GM10248 (cell line): ENCODE measurements at regions of chr1 and their contacts with region 1.

Region 1: GRCh38 chr1:243312952-243313634 is 57.3 kb downstream of the SDCCAG8 start:
- DNase-seq: peak; percentile 22
- CTCF ChIP-seq: no peak

Region 2: DNA sequence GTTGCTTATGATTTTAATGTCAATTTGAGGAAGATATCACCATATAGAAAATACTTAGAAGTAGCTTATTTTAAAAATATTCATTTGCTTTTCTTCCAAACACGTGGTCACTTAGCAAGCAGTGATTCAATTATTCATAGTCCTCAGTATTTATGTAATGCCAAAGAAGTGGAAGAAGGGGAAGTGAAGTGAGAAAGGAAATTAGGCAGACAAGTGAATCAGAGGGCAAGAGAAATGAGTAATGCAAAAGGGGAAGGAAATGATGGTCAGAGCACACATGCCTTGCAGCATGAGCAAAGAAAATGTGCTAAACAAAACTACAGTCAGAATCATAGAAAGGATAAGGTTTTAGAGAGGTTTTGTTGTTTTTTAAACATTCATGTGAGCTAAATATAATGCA is 25.4 kb before region 1 on chr1:
- CTCF ChIA-PET with region 1: no interaction called
- POLR2A ChIA-PET with region 1: no interaction called
- DNase-seq: peak; percentile 52
- CTCF ChIP-seq: no peak

Region 3: GRCh38 chr1:243323491-243323890 is 10.4 kb after region 1 on chr1:
- CTCF ChIA-PET with region 1: interaction called, 20 read pairs
- POLR2A ChIA-PET with region 1: no interaction called
- DNase-seq: no peak
- CTCF ChIP-seq: no peak